PC-9 (cell line): ENCODE measurements at regions of chrX and their contacts with region 1.

Region 1: GRCh38 chrX:45769761-45770582 is 569.3 kb upstream of the DIPK2B start:
- DNase-seq: peak; percentile 54 to 73
- H3K4me3 ChIP-seq: peak overlapping the region; percentile 57
- H3K27ac ChIP-seq: peak overlapping the region; percentile 87
- H3K4me1 ChIP-seq: peaks cover 26% of the 10 kb centered on the region
- H3K27me3 ChIP-seq: no peaks in the 10 kb centered on the region
- CTCF ChIP-seq: no peak

Region 2: DNA sequence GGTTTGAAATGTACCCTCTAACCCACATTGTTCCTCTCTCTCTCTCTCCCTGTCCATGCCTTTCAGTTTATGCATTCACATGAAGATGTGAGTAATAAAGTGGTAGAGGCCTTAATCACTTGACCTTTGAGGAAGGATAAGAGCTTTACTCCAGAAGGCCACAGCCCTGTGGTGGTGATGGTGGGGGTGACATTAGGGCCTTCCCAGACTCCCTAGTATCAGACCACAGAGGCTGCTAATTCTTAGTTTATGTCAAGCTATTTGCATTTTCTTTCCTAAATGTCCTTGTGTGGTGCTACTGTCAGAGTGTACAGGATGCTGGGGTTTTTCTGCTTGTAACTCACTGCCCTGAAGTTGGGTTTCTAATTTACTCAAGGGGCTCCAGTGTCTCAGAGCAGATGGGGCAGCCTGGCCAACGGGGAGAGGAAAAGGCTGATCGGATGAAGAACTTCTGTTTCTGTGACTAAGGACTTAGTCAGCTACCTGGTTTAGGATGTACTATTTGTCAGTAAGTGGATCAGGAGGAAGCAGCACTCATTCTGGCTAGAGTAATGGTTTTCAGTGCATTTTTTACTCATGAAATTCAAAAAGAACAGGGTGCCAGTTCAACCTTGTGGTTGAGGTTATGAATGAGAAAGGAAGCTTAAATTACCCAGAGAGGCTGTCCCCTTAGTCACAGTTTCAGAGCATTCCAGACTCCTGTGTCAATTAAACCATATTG is 59.7 kb before region 1 on chrX:
- CTCF ChIA-PET with region 1: no interaction called
- POLR2A ChIA-PET with region 1: no interaction called
- intact Hi-C with region 1: loop called (anchors 2 kb)
- DNase-seq: peak; percentile 22 to 90
- H3K4me3 ChIP-seq: no peak overlapping the region
- H3K27ac ChIP-seq: peak overlapping the region; percentile 96
- H3K4me1 ChIP-seq: peaks cover 35% of the 10 kb centered on the region
- H3K27me3 ChIP-seq: no peaks in the 10 kb centered on the region
- CTCF ChIP-seq: no peak

Region 3: GRCh38 chrX:45758319-45758718 is 11.7 kb before region 1 on chrX:
- CTCF ChIA-PET with region 1: no interaction called
- POLR2A ChIA-PET with region 1: interaction called, 52 read pairs
- intact Hi-C with region 1: no loop called
- DNase-seq: no peak
- H3K4me3 ChIP-seq: no peak overlapping the region
- H3K27ac ChIP-seq: peak overlapping the region; percentile 61
- H3K4me1 ChIP-seq: no peaks in the 10 kb centered on the region
- H3K27me3 ChIP-seq: no peaks in the 10 kb centered on the region
- CTCF ChIP-seq: no peak

Region 4: GRCh38 chrX:46029777-46030176 is 259.8 kb after region 1 on chrX:
- CTCF ChIA-PET with region 1: no interaction called
- POLR2A ChIA-PET with region 1: no interaction called
- intact Hi-C with region 1: no loop called
- DNase-seq: peak in 1 of 2 experiments; percentile 35
- H3K4me3 ChIP-seq: no peak overlapping the region
- H3K27ac ChIP-seq: no peak overlapping the region
- H3K4me1 ChIP-seq: no peaks in the 10 kb centered on the region
- H3K27me3 ChIP-seq: no peaks in the 10 kb centered on the region
- CTCF ChIP-seq: no peak

Region 5: DNA sequence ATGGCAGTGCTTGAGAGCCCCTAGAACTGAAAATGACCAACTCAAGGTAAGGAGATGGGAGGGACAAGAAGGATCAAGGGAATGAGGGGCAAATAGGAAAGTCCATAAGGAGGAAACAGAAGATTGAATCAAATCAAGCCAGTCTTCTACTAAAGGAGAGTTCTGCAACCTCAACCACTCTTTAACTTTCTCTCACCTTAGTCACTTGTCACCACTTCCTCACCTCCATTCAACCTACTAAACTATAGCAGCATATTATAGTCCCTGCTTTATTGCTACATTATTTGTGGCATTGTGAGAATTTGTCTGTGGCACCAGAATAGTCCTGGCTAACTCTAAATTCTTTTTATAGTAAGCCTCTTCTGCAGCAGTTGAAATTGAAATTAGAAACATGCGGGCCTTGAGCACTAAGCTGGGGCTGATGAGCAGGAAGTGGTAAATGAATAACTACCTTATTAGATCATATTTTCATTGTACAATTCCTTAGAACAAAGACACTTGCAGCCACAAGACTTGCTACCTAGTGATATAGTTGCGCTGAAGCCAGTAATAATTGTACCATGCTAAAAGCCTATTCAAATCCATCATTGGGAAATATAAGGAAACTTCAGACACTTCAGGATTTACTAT is 438.4 kb after region 1 on chrX:
- CTCF ChIA-PET with region 1: no interaction called
- POLR2A ChIA-PET with region 1: no interaction called
- intact Hi-C with region 1: loop called (anchors 5 kb)
- DNase-seq: peak in 1 of 2 experiments; percentile 83
- H3K4me3 ChIP-seq: no peak overlapping the region
- H3K27ac ChIP-seq: peak overlapping the region; percentile 93
- H3K4me1 ChIP-seq: peaks cover 29% of the 10 kb centered on the region
- H3K27me3 ChIP-seq: no peaks in the 10 kb centered on the region
- CTCF ChIP-seq: no peak